ENCODE measurements at regions of chr4 and their contacts with region 1.

Region 1: DNA sequence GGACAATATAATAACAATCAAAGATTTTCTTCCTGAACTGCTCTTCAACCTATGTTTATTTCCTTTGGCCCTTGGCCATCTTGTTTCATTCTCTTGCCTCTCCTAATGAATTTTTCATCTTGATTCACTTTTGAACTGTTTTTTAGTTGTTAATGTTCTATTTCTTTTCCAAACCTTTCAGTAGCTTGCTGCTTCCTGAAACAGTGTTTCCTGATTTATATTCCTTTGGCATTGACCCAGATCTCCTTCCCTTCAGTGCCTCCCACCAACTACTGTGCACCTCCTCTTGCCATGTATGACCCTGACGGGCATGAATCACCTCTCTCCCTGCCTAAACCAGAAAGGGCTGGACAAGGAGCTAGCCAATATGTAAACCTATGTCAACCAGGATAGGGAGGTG is 25.6 kb upstream of the SPP1 start:
- DNase-seq: peak; percentile 21
- ATAC-seq: no peak; the same call in none of the 2 replicates
- H3K4me3 ChIP-seq: no peak overlapping the region
- H3K27ac ChIP-seq: no peak overlapping the region
- H3K4me1 ChIP-seq: no peaks in the 10 kb centered on the region
- H3K27me3 ChIP-seq: peaks cover 1% of the 10 kb centered on the region
- CTCF ChIP-seq: no peak
- POLR2A ChIP-seq: no peak
- RAD21 ChIP-seq: no peak

Region 2: GRCh38 chr4:87807402-87807801 is 142.6 kb before region 1 on chr4:
- CTCF ChIA-PET with region 1: no interaction called
- POLR2A ChIA-PET with region 1: no interaction called
- dilution Hi-C with region 1: no loop called
- in situ Hi-C with region 1: no loop called
- intact Hi-C with region 1: no loop called
- DNase-seq: no peak
- ATAC-seq: no peak
- H3K4me3 ChIP-seq: no peak overlapping the region
- H3K27ac ChIP-seq: no peak overlapping the region
- H3K4me1 ChIP-seq: no peaks in the 10 kb centered on the region; the same call in 1 of the 2 replicates
- H3K27me3 ChIP-seq: no peaks in the 10 kb centered on the region
- CTCF ChIP-seq: no peak
- POLR2A ChIP-seq: no peak
- RAD21 ChIP-seq: no peak

Region 3: GRCh38 chr4:88268913-88269312 is 319.0 kb after region 1 on chr4:
- CTCF ChIA-PET with region 1: no interaction called
- POLR2A ChIA-PET with region 1: no interaction called
- dilution Hi-C with region 1: no loop called
- in situ Hi-C with region 1: no loop called
- intact Hi-C with region 1: no loop called
- DNase-seq: no peak
- ATAC-seq: no peak
- H3K4me3 ChIP-seq: no peak overlapping the region
- H3K27ac ChIP-seq: no peak overlapping the region
- H3K4me1 ChIP-seq: no peaks in the 10 kb centered on the region
- H3K27me3 ChIP-seq: no peaks in the 10 kb centered on the region
- CTCF ChIP-seq: no peak
- POLR2A ChIP-seq: no peak
- RAD21 ChIP-seq: no peak

Region 4: GRCh38 chr4:89681215-89681614 is 1731.3 kb after region 1 on chr4:
- CTCF ChIA-PET with region 1: no interaction called
- POLR2A ChIA-PET with region 1: no interaction called
- dilution Hi-C with region 1: no loop called
- in situ Hi-C with region 1: no loop called
- intact Hi-C with region 1: loop called (anchors 10 kb)
- DNase-seq: no peak
- ATAC-seq: no peak
- H3K4me3 ChIP-seq: no peak overlapping the region
- H3K27ac ChIP-seq: no peak overlapping the region
- H3K4me1 ChIP-seq: no peaks in the 10 kb centered on the region
- H3K27me3 ChIP-seq: no peaks in the 10 kb centered on the region
- CTCF ChIP-seq: no peak
- POLR2A ChIP-seq: no peak
- RAD21 ChIP-seq: no peak